Activated T-helper 1 cell treated with anti-CD3 and anti-CD28 coated beads, Interleukin-12 subunit alpha, Interleukin-12 subunit beta, Interleukin-2, Interleukin-4 antibody, amounts not matched to agents 30 ng/mL and 10 ng/mL and 1 ng/mL, durations not matched to agents 14 hours and 24 hours and 36 hours (primary cell): ENCODE measurements at regions of chr5 and their contacts with region 1.

Region 1: GRCh38 chr5:122019919-122020590 is 58.0 kb downstream of the LOX start:
- DNase-seq: no peak
- H3K4me3 Mint-ChIP-seq: peak overlapping the region; percentile 28
- H3K27ac Mint-ChIP-seq: peak overlapping the region; percentile 52
- H3K4me1 Mint-ChIP-seq: peaks cover 10% of the 10 kb centered on the region
- H3K27me3 Mint-ChIP-seq: no peaks in the 10 kb centered on the region

Region 2: GRCh38 chr5:121979691-121980090 is 40.4 kb before region 1 on chr5:
- intact Hi-C with region 1: loop called (anchors 2 kb)
- DNase-seq: no peak
- H3K4me3 Mint-ChIP-seq: no peak overlapping the region
- H3K27ac Mint-ChIP-seq: no peak overlapping the region
- H3K4me1 Mint-ChIP-seq: peaks cover 10% of the 10 kb centered on the region
- H3K27me3 Mint-ChIP-seq: no peaks in the 10 kb centered on the region

Region 3: GRCh38 chr5:122009436-122009835 is 10.6 kb before region 1 on chr5:
- intact Hi-C with region 1: loop called (anchors 1 kb)
- DNase-seq: no peak
- H3K4me3 Mint-ChIP-seq: no peak overlapping the region
- H3K27ac Mint-ChIP-seq: peak overlapping the region; percentile 48
- H3K4me1 Mint-ChIP-seq: peaks cover 13% of the 10 kb centered on the region
- H3K27me3 Mint-ChIP-seq: no peaks in the 10 kb centered on the region

Region 4: DNA sequence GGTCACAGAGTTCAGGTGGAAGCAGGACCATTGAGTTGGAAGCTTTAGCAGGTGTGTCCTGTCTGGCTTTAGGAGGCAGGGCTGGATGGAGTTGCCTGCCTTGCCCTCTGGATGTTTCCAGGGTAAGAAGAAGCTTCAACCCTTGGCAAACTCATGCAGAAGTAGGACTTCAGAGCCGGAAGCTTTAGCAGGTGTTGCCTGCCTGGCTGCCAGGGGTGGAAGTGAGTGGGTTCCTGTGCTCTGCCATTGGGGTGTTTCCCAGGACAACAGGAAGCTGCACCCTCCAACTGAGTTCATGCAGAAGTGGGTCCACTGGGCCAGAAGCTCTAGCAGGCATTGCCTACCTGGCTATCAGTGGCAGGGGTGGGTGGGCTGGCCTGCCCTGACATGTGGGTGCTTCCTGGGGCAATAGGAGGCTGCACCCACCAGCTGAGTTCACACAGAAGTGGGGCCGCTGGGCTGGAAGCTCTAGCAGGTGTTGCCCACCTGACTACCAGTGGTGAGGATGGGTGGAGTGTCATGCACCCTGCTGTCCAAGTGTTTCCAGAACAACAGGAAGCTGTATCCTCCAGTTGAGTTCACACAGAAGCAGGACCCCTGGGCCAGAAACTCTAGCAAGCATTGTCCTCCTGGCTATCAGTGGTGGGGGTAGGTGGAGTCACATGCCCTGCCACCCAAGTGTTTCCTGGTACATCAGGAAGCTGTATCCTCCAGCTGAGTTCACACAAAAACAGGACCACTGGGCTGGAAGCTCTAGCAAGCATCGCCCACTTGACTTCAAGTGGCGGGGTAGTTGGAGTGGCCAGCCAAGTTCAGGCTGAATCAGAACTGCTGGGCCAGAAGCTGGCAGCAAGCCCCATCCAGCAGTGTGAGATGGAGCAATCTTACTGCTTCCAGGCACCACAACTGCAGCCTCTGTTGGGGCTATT is 33.4 kb after region 1 on chr5:
- intact Hi-C with region 1: no loop called
- DNase-seq: no peak
- H3K4me3 Mint-ChIP-seq: no peak overlapping the region
- H3K27ac Mint-ChIP-seq: no peak overlapping the region
- H3K4me1 Mint-ChIP-seq: no peaks in the 10 kb centered on the region
- H3K27me3 Mint-ChIP-seq: no peaks in the 10 kb centered on the region

Region 5: DNA sequence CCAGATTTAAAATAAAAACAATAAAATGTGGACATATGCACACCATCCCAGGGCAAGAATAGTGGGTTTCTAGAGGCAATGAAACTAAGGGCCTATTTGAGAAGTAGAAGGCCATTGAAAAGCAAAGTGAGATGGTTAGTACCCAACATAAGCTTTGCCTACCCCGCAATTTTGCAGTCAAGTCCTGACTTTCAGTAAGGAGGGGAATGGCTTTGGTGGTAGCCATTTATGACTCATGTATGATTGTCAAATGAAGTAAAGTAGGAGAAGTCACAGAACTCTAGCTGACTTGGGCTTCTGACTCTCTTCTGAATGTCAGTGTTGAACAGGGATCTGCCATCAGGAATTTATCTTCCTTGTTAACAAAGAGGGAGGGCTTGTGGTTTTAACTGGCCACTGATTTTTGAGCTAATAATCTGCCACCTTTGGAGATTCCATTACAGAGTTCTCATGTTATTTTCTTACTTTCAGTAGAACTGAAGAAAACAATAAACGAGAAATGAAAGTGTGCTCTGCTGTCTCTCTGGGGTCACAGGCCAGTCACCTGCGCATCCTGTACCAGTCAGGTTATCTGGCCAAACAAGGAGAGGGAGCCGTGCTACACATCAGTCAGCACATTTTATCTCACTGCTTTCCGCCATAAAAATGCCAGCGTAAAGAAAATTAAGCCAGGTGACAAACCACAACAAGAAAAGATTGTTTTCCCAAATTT is 277.7 kb after region 1 on chr5:
- intact Hi-C with region 1: no loop called
- DNase-seq: no peak
- H3K4me3 Mint-ChIP-seq: no peak overlapping the region
- H3K27ac Mint-ChIP-seq: no peak overlapping the region
- H3K4me1 Mint-ChIP-seq: no peaks in the 10 kb centered on the region
- H3K27me3 Mint-ChIP-seq: peaks cover 2% of the 10 kb centered on the region